Endothelial cell of umbilical vein (primary cell): ENCODE measurements at regions of chr7 and their contacts with region 1.

Region 1: GRCh38 chr7:87345166-87345927 is at the start of gene CROT:
- DNase-seq: peak; percentile 97
- H3K4me3 ChIP-seq: peak within 1 kb of the TSS; percentile 49 to 75 (median 67)
- H3K27ac ChIP-seq: peak within 1 kb of the TSS; percentile 4
- H3K4me1 ChIP-seq: peaks cover 6% of the 10 kb centered on the region
- H3K27me3 ChIP-seq: no peaks in the 10 kb centered on the region
- CTCF ChIP-seq: peak in 1 of 2 donors; percentile 10
- POLR2A ChIP-seq: peak; percentile 83
- total RNA-seq, gene CROT: 5.7 and 6.6 TPM in 2 replicates

Region 2: DNA sequence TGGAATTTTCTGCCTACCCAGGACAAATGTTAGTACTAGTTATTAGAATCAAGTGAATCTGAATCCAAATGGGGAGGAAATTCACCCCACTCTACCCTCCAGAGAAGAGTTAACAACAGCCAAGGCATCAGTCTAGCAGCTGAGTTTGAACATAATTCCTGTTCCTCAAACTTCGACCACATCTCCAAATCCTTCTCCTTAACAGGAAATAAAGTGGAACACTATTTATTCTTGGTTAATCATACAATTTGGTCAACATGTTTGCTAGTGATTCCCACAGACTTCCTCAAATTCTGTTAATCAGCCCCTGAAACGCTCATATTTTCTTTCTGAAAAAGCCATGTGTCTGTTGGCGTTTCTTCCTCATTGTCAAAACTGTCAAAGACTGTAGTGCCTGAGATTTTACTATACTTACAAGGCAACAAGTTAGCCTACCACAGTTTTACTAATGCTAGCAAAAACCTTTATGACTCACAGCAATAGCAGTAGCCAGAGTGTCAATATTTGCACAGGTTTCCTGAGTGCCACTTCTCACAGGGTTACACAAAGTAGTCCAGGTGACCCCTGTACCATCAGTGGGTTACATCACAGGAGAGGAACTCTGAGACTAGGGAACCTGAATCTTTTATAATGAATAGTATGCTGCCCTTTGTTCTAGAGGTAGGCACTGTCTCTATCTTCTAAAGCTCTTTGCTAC is 498.7 kb before region 1 on chr7:
- CTCF ChIA-PET with region 1: no interaction called
- POLR2A ChIA-PET with region 1: no interaction called
- dilution Hi-C with region 1: no loop called
- intact Hi-C with region 1: no loop called
- DNase-seq: no peak
- H3K4me3 ChIP-seq: no peak overlapping the region
- H3K27ac ChIP-seq: no peak overlapping the region
- H3K4me1 ChIP-seq: no peaks in the 10 kb centered on the region
- H3K27me3 ChIP-seq: no peaks in the 10 kb centered on the region
- CTCF ChIP-seq: no peak
- POLR2A ChIP-seq: no peak

Region 3: DNA sequence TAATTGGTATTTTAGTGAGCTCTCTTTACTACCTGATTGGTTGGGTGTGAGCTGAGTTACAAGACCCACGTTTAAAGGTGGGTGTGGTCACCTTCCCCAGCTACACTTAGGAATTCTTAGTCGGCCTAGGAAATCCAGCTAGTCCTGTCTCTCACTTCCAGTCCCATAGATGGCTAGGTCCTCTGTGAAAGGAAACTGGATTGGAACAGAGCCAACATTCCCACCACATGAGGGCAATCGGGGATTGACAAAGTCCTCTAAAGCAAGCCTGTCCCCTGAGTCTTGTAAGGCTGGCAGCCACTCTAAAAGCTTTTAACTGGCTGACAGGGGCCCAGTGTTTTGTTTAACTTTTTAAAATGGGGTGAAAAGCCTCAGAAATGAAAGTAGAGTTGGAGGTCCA is 15.0 kb before region 1 on chr7:
- CTCF ChIA-PET with region 1: no interaction called
- POLR2A ChIA-PET with region 1: no interaction called
- dilution Hi-C with region 1: no loop called
- intact Hi-C with region 1: no loop called
- DNase-seq: no peak
- H3K4me3 ChIP-seq: no peak overlapping the region
- H3K27ac ChIP-seq: no peak overlapping the region
- H3K4me1 ChIP-seq: no peaks in the 10 kb centered on the region
- H3K27me3 ChIP-seq: no peaks in the 10 kb centered on the region
- CTCF ChIP-seq: no peak
- POLR2A ChIP-seq: no peak

Region 4: GRCh38 chr7:87886875-87887274 is 541.5 kb after region 1 on chr7:
- CTCF ChIA-PET with region 1: no interaction called
- POLR2A ChIA-PET with region 1: no interaction called
- dilution Hi-C with region 1: no loop called
- intact Hi-C with region 1: loop called (anchors 10 kb)
- DNase-seq: peak; percentile 56
- H3K4me3 ChIP-seq: no peak overlapping the region
- H3K27ac ChIP-seq: no peak overlapping the region
- H3K4me1 ChIP-seq: no peaks in the 10 kb centered on the region
- H3K27me3 ChIP-seq: no peaks in the 10 kb centered on the region
- CTCF ChIP-seq: peak; percentile 3 to 9
- POLR2A ChIP-seq: no peak

Region 5: GRCh38 chr7:87993269-87993668 is 647.9 kb after region 1 on chr7:
- CTCF ChIA-PET with region 1: no interaction called
- POLR2A ChIA-PET with region 1: no interaction called
- dilution Hi-C with region 1: no loop called
- intact Hi-C with region 1: no loop called
- DNase-seq: no peak
- H3K4me3 ChIP-seq: no peak overlapping the region
- H3K27ac ChIP-seq: no peak overlapping the region
- H3K4me1 ChIP-seq: no peaks in the 10 kb centered on the region
- H3K27me3 ChIP-seq: no peaks in the 10 kb centered on the region
- CTCF ChIP-seq: no peak
- POLR2A ChIP-seq: no peak

Region 6: GRCh38 chr7:88337556-88337955 is 992.2 kb after region 1 on chr7:
- CTCF ChIA-PET with region 1: no interaction called
- POLR2A ChIA-PET with region 1: no interaction called
- dilution Hi-C with region 1: no loop called
- intact Hi-C with region 1: no loop called
- DNase-seq: no peak
- H3K4me3 ChIP-seq: no peak overlapping the region
- H3K27ac ChIP-seq: no peak overlapping the region
- H3K4me1 ChIP-seq: no peaks in the 10 kb centered on the region
- H3K27me3 ChIP-seq: no peaks in the 10 kb centered on the region
- CTCF ChIP-seq: no peak
- POLR2A ChIP-seq: no peak